CD8-positive, alpha-beta memory T cell (primary cell): ENCODE measurements at regions of chr1 and their contacts with region 1.

Region 1: DNA sequence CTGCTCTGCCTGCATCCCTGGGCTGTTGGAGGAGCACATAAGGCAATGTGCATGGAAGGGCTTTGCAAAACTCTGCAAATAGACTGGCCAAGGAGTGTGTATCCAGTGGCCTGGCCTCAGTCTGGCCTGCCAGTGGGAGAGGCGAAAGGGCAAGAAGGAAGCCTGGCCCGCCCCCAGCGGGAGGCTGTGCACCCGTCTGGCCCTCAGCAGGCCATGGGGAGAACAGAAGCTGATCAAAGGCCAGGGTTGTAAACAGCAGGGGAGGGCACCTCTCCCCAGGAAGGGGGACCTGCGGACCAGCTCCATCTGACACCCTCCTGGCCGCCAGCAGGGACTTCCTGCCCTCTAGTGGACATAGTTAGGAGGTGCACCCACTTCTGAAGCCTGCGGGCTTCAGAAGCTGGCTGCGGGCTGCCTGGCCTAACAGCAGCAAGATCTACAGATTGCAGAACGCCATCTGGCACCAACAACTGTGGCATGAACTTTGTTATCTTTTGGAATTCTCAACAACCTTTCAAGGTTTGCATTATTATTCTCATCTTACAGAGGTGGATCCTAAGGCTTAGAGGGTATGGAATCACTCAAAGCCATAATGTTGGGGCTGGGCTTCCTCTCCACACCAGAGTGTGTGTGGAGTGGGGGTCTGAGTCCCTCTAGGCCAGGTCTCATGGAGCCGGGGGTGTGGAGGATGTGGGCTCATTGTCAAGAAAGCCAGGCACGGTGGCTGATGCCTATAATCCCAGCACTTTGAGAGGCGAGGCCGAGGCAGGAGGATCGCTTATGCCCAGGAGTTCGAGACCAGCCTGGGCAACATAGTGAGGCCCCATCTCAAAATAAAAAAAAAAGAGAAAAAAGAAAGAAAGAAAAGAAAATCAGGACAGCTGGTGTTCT is 18.9 kb upstream of the CDK18 start:
- DNase-seq: peak; percentile 52 to 85 (median 71)
- H3K4me3 ChIP-seq: no peak overlapping the region
- H3K4me3 Mint-ChIP-seq: peak overlapping the region in 1 of 7 donors; percentile 4
- H3K27ac ChIP-seq: no peak overlapping the region
- H3K27ac Mint-ChIP-seq: peak overlapping the region in 4 of 8 donors; percentile 44 to 80 (median 48)
- H3K4me1 ChIP-seq: peaks cover 22% of the 10 kb centered on the region
- H3K4me1 Mint-ChIP-seq: peaks cover 44 to 50% (median 49%) of the 10 kb centered on the region in 3 donors
- H3K27me3 ChIP-seq: no peaks in the 10 kb centered on the region
- H3K27me3 Mint-ChIP-seq: peaks cover 2 to 17% of the 10 kb centered on the region in 2 donors

Region 2: GRCh38 chr1:205321164-205321958 is 164.2 kb before region 1 on chr1 and contains the start of gene NUAK2:
- CTCF ChIA-PET with region 1: interaction called, 15 read pairs
- POLR2A ChIA-PET with region 1: no interaction called
- DNase-seq: peak; percentile 67 to 89 (median 82)
- H3K4me3 ChIP-seq: peak within 1 kb of the TSS; percentile 96
- H3K4me3 Mint-ChIP-seq: peak within 1 kb of the TSS; percentile 93 to 100 (median 96)
- H3K27ac ChIP-seq: peak within 1 kb of the TSS; percentile 48
- H3K27ac Mint-ChIP-seq: peak within 1 kb of the TSS; percentile 84 to 94 (median 89)
- H3K4me1 ChIP-seq: peaks cover 55% of the 10 kb centered on the region
- H3K4me1 Mint-ChIP-seq: peaks cover 59 to 74% (median 74%) of the 10 kb centered on the region in 3 donors
- H3K27me3 ChIP-seq: no peaks in the 10 kb centered on the region
- H3K27me3 Mint-ChIP-seq: peaks cover 0 to 4% of the 10 kb centered on the region in 2 donors
- total RNA-seq, gene NUAK2: 4.5 to 4.7 TPM

Region 3: GRCh38 chr1:205354259-205354904 is 131.2 kb before region 1 on chr1:
- CTCF ChIA-PET with region 1: interaction called, 53 read pairs
- POLR2A ChIA-PET with region 1: no interaction called
- DNase-seq: peak; percentile 32 to 74 (median 46)
- H3K4me3 ChIP-seq: no peak overlapping the region
- H3K4me3 Mint-ChIP-seq: no peak overlapping the region
- H3K27ac ChIP-seq: no peak overlapping the region
- H3K27ac Mint-ChIP-seq: no peak overlapping the region
- H3K4me1 ChIP-seq: no peaks in the 10 kb centered on the region
- H3K4me1 Mint-ChIP-seq: no peaks in the 10 kb centered on the region
- H3K27me3 ChIP-seq: peaks cover 11% of the 10 kb centered on the region
- H3K27me3 Mint-ChIP-seq: peaks cover 9 to 33% of the 10 kb centered on the region in 2 donors

Region 4: DNA sequence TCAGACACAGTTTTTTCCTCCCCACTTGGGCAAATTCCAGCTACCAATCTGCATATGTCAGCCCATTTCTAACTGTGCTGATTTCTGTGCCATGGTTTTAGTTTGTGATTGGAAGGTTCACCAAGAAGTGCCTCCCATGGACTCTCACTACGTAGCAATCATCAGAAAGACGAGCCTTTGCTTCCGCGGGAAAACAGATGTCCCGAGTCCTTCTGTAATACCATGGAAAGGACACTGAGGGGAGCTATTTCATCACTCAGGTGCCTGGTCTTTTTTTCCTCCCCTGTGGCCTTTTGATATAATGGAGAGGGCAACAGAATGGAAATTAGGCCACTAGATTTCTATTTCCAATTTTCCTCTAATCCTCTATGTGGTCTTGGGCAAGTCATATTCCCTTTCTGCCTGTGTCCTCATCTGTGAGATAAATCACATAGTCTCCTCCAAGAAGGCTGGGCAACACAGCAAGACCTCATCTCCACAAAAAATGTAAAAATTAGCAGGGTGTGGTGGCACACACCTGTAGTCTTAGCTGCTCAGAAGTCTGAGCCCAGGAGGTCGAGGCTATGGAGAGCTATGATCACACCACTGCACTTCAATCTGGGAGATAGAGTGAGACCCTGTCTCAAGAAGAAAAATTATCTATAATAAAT is 88.5 kb before region 1 on chr1:
- CTCF ChIA-PET with region 1: interaction called, 146 read pairs
- POLR2A ChIA-PET with region 1: interaction called, 3 read pairs
- DNase-seq: peak in 4 of 5 donors; percentile 6 to 53 (median 36)
- H3K4me3 ChIP-seq: no peak overlapping the region
- H3K4me3 Mint-ChIP-seq: no peak overlapping the region
- H3K27ac ChIP-seq: no peak overlapping the region
- H3K27ac Mint-ChIP-seq: peak overlapping the region in 1 of 8 donors; percentile 54
- H3K4me1 ChIP-seq: no peaks in the 10 kb centered on the region
- H3K4me1 Mint-ChIP-seq: peaks cover 7 to 10% (median 10%) of the 10 kb centered on the region in 3 donors
- H3K27me3 ChIP-seq: no peaks in the 10 kb centered on the region
- H3K27me3 Mint-ChIP-seq: peaks cover 8 to 21% of the 10 kb centered on the region in 2 donors

Region 5: DNA sequence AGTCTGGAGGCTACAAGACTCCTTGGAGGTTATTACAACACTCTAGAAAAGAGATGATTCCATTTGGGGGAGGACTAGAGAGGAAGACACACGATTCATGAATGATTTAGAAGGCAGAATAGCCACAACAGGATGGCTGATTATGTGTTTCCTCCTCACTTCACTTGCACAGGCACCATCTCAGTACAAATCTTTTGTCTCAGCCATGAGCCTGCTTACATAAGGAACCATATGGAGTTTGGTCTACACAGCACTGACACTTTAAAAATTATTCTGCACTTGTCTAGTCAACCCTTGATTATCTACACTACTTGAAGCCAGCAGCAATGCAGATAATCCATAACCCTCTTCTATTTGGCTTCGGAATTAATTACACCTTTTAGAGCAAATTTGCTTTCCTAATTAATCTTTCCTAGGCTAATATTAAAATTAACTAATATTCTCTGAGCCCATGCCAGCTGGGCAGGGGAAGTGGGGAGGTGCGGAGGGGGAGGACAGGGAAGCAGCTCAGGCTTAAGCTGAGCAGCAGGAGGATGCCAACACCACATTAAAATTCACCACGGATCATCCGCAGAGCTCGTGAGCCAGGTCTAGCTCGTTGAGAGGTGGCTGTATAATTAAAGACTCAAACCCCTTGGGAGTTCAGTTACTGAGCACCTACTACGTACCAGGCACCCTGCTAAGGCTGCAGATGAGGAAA is 60.5 kb before region 1 on chr1:
- CTCF ChIA-PET with region 1: interaction called, 34 read pairs
- POLR2A ChIA-PET with region 1: interaction called, 3 read pairs
- DNase-seq: no peak
- H3K4me3 ChIP-seq: no peak overlapping the region
- H3K4me3 Mint-ChIP-seq: no peak overlapping the region
- H3K27ac ChIP-seq: no peak overlapping the region
- H3K27ac Mint-ChIP-seq: no peak overlapping the region
- H3K4me1 ChIP-seq: no peaks in the 10 kb centered on the region
- H3K4me1 Mint-ChIP-seq: peaks cover under 1 to 4% (median 2%) of the 10 kb centered on the region in 3 donors
- H3K27me3 ChIP-seq: no peaks in the 10 kb centered on the region
- H3K27me3 Mint-ChIP-seq: peaks cover 9 to 24% of the 10 kb centered on the region in 2 donors

Region 6: GRCh38 chr1:205440476-205441317 is 44.9 kb before region 1 on chr1:
- CTCF ChIA-PET with region 1: interaction called, 26 read pairs
- POLR2A ChIA-PET with region 1: interaction called, 7 read pairs
- DNase-seq: peak; percentile 45 to 83 (median 59)
- H3K4me3 ChIP-seq: peak overlapping the region; percentile 78
- H3K4me3 Mint-ChIP-seq: peak overlapping the region; percentile 81 to 96 (median 85)
- H3K27ac ChIP-seq: peak overlapping the region; percentile 63
- H3K27ac Mint-ChIP-seq: peak overlapping the region; percentile 86 to 100 (median 96)
- H3K4me1 ChIP-seq: peaks cover 34% of the 10 kb centered on the region
- H3K4me1 Mint-ChIP-seq: peaks cover 43 to 64% (median 55%) of the 10 kb centered on the region in 3 donors
- H3K27me3 ChIP-seq: no peaks in the 10 kb centered on the region
- H3K27me3 Mint-ChIP-seq: no peaks in the 10 kb centered on the region